ENCODE measurements at regions of chr14 and their contacts with region 1.

Region 1: GRCh38 chr14:73568381-73568781 is 632 bp upstream of the ACOT2 start:
- DNase-seq: no peak
- ATAC-seq: no peak
- H3K4me3 Mint-ChIP-seq: peak overlapping the region; percentile 94
- H3K27ac Mint-ChIP-seq: peak overlapping the region; percentile 95
- H3K4me1 Mint-ChIP-seq: peaks cover 36% of the 10 kb centered on the region
- H3K27me3 Mint-ChIP-seq: no peaks in the 10 kb centered on the region
- CTCF ChIP-seq: no peak

Region 2: GRCh38 chr14:73058224-73058921 is 510.0 kb before region 1 on chr14 and contains the start of gene RBM25:
- CTCF ChIA-PET with region 1: no interaction called
- POLR2A ChIA-PET with region 1: interaction called, 11 read pairs
- intact Hi-C with region 1: loop called (anchors 5 kb)
- DNase-seq: peak; percentile 90
- ATAC-seq: peak; percentile 93
- H3K4me3 Mint-ChIP-seq: no peak within 1 kb of the TSS
- H3K27ac Mint-ChIP-seq: no peak within 1 kb of the TSS
- H3K4me1 Mint-ChIP-seq: peaks cover 42% of the 10 kb centered on the region
- H3K27me3 Mint-ChIP-seq: no peaks in the 10 kb centered on the region
- CTCF ChIP-seq: no peak
- total RNA-seq, gene RBM25: 114 and 123 TPM in 2 replicates

Region 3: GRCh38 chr14:73443758-73444157 is 124.6 kb before region 1 on chr14:
- CTCF ChIA-PET with region 1: no interaction called
- POLR2A ChIA-PET with region 1: interaction called, 10 read pairs
- intact Hi-C with region 1: no loop called
- DNase-seq: no peak
- ATAC-seq: no peak
- H3K4me3 Mint-ChIP-seq: no peak overlapping the region
- H3K27ac Mint-ChIP-seq: no peak overlapping the region
- H3K4me1 Mint-ChIP-seq: peaks cover 12% of the 10 kb centered on the region
- H3K27me3 Mint-ChIP-seq: no peaks in the 10 kb centered on the region
- CTCF ChIP-seq: no peak

Region 4: GRCh38 chr14:73503648-73504047 is 64.7 kb before region 1 on chr14:
- CTCF ChIA-PET with region 1: interaction called, 16 read pairs
- POLR2A ChIA-PET with region 1: interaction called, 8 read pairs
- intact Hi-C with region 1: loop called (anchors 1 kb)
- DNase-seq: no peak
- ATAC-seq: no peak
- H3K4me3 Mint-ChIP-seq: no peak overlapping the region
- H3K27ac Mint-ChIP-seq: no peak overlapping the region
- H3K4me1 Mint-ChIP-seq: no peaks in the 10 kb centered on the region
- H3K27me3 Mint-ChIP-seq: no peaks in the 10 kb centered on the region
- CTCF ChIP-seq: no peak

Region 5: GRCh38 chr14:73602984-73603383 is 34.6 kb after region 1 on chr14:
- CTCF ChIA-PET with region 1: no interaction called
- POLR2A ChIA-PET with region 1: no interaction called
- intact Hi-C with region 1: no loop called
- DNase-seq: no peak
- ATAC-seq: no peak
- H3K4me3 Mint-ChIP-seq: no peak overlapping the region
- H3K27ac Mint-ChIP-seq: no peak overlapping the region
- H3K4me1 Mint-ChIP-seq: no peaks in the 10 kb centered on the region
- H3K27me3 Mint-ChIP-seq: peaks cover 10% of the 10 kb centered on the region
- CTCF ChIP-seq: no peak

Region 6: DNA sequence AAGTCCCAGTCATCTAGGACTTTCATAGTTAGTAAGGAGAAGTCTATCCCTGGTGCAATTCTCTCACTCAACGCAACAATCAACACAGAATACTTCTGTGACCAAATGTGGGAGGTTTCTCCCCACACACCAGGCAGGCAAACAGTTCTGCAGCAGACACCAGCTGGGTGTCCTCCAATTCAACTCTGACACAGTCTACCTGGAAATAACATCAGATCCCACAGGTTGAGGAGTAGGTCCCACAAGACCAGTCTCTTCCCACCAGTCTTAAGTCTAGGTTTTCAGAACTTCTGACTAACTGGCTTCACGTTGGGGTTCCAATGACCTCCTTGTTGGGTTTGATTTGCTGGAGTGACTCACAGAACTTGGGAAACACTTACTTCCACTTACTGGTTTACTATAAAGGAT is 58.8 kb after region 1 on chr14:
- CTCF ChIA-PET with region 1: interaction called, 12 read pairs
- POLR2A ChIA-PET with region 1: interaction called, 20 read pairs
- intact Hi-C with region 1: no loop called
- DNase-seq: no peak
- ATAC-seq: no peak
- H3K4me3 Mint-ChIP-seq: no peak overlapping the region
- H3K27ac Mint-ChIP-seq: no peak overlapping the region
- H3K4me1 Mint-ChIP-seq: no peaks in the 10 kb centered on the region
- H3K27me3 Mint-ChIP-seq: peaks cover 6% of the 10 kb centered on the region
- CTCF ChIP-seq: no peak